Panc1 (cell line): ENCODE measurements at regions of chr11 and their contacts with region 1.

Region 1: GRCh38 chr11:126062679-126063506 is at the start of gene CDON:
- DNase-seq: peak; percentile 28
- ATAC-seq: peak; percentile 99
- H3K4me3 ChIP-seq: peak within 1 kb of the TSS; percentile 56 to 76
- H3K27ac ChIP-seq: peak within 1 kb of the TSS; percentile 90
- H3K4me1 ChIP-seq: peaks cover 14% of the 10 kb centered on the region
- H3K27me3 ChIP-seq: peaks cover 2% of the 10 kb centered on the region; the same call in 1 of the 2 replicates
- CTCF ChIP-seq: no peak
- total RNA-seq, gene CDON: 17.1 TPM

Region 2: GRCh38 chr11:125923012-125923579 is 139.8 kb before region 1 on chr11:
- CTCF ChIA-PET with region 1: no interaction called
- POLR2A ChIA-PET with region 1: no interaction called
- in situ Hi-C with region 1: no loop called
- intact Hi-C with region 1: loop called (anchors 2 kb)
- DNase-seq: peak; percentile 64
- ATAC-seq: peak; percentile 94
- H3K4me3 ChIP-seq: no peak overlapping the region
- H3K27ac ChIP-seq: no peak overlapping the region
- H3K4me1 ChIP-seq: no peaks in the 10 kb centered on the region
- H3K27me3 ChIP-seq: peaks cover 15% of the 10 kb centered on the region; the same call in 1 of the 2 replicates
- CTCF ChIP-seq: peak; percentile 95

Region 3: DNA sequence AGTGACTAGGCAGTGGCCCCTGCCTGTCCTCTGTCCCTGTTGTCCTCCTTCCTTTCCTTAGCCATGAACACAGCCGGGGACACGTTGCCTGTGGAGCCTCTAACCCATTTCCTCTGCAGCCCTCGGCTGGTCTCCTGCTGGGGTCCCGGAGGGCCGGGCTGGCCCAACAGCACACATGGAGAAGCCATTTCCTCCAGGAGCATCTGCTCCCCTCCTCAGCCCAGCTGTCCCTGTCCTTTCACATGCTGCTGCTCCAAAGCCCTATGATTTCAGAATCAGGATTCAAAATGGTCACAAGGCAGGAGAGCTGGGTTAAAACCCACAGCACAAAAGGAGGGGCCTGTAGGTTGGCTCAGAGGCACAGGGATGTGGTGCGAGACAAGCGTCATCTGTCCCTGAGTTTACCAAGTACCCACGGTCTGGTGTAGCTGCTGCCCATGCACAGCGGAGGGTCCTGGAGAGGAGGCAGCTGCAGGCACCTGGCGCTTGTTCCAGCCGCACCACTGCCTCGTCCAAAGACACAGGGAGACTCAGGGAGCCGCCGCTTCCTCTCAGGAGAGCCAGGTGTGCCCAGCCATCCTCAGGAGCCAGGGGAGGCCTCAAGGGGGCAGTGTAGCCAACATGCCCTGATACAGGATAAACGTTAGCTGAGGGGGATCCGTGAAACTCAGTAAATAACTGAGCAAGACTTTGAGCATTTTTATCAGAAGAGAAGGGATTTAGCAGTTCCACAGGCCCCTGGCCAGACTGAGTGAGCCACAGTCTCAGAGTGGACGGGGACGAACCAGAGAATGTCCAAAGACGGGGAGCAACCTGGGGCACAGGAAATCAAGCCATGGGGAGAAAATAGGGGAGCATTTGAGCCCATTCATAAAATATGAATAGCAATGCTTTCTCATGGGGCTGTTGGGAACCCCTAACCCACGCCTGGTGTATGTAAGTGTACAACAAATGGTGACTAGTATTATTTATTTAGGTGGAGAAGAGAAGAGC is 121.0 kb before region 1 on chr11:
- CTCF ChIA-PET with region 1: interaction called, 9 read pairs
- POLR2A ChIA-PET with region 1: no interaction called
- in situ Hi-C with region 1: no loop called
- intact Hi-C with region 1: loop called (anchors 5 kb)
- DNase-seq: no peak
- ATAC-seq: peak; percentile 88
- H3K4me3 ChIP-seq: no peak overlapping the region
- H3K27ac ChIP-seq: no peak overlapping the region
- H3K4me1 ChIP-seq: no peaks in the 10 kb centered on the region
- H3K27me3 ChIP-seq: no peaks in the 10 kb centered on the region
- CTCF ChIP-seq: peak; percentile 95

Region 4: DNA sequence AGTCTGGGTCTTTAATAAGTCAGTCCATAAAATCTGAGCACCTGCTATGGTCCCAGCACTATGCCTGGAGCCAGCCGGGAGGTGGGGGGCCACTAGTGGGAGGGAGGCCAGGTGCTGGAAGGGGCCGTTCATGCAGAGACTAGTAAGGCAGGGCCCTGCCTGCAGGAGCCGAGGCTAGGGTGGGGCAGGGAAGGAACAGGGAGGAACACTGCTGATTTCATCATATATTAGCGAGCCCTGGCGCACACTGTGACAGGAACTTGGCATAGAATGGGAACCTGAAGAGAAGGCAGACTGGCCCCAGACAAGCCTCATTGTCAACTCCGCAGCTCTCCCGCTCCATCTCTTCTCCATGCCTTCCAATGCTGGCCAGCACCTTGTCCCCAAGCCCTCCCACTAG is 109.9 kb before region 1 on chr11:
- CTCF ChIA-PET with region 1: no interaction called
- POLR2A ChIA-PET with region 1: no interaction called
- in situ Hi-C with region 1: no loop called
- intact Hi-C with region 1: no loop called
- DNase-seq: no peak
- ATAC-seq: no peak
- H3K4me3 ChIP-seq: no peak overlapping the region
- H3K27ac ChIP-seq: no peak overlapping the region
- H3K4me1 ChIP-seq: no peaks in the 10 kb centered on the region
- H3K27me3 ChIP-seq: no peaks in the 10 kb centered on the region
- CTCF ChIP-seq: no peak

Region 5: DNA sequence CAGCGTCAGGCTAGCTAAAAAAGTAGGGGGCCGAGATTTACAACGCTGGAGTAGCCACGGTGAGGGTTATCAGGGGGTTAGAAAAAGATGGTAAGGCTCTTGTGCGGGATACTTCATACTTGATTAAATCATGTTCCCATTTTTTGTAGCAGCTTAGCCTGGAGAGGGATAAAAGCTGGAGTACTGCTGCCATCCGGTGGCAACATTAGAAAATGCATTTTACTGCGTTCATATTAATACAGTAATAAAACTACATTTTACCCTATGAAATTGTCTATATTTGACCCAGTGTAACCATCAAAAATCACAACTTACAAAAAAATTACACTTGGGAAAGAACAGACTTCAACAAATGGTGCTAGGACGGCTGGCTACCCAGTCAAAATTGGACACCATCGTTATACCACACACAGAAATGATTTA is 131.2 kb after region 1 on chr11:
- CTCF ChIA-PET with region 1: no interaction called
- POLR2A ChIA-PET with region 1: no interaction called
- in situ Hi-C with region 1: no loop called
- intact Hi-C with region 1: loop called (anchors 1 kb)
- DNase-seq: no peak
- ATAC-seq: peak; percentile 72
- H3K4me3 ChIP-seq: no peak overlapping the region
- H3K27ac ChIP-seq: no peak overlapping the region
- H3K4me1 ChIP-seq: peaks cover 3% of the 10 kb centered on the region; the same call in 1 of the 2 replicates
- H3K27me3 ChIP-seq: no peaks in the 10 kb centered on the region
- CTCF ChIP-seq: peak; percentile 84